ENCODE measurements at regions of chr13 and their contacts with region 1.

Region 1: GRCh38 chr13:74250738-74251190 is 116.6 kb upstream of the KLF12 start:
- DNase-seq: peak; percentile 88
- H3K4me3 ChIP-seq: no peak overlapping the region
- H3K27ac ChIP-seq: peak overlapping the region; percentile 44
- H3K4me1 ChIP-seq: peaks cover 22% of the 10 kb centered on the region
- H3K27me3 ChIP-seq: no peaks in the 10 kb centered on the region
- CTCF ChIP-seq: no peak

Region 2: GRCh38 chr13:74270018-74270417 is 19.3 kb after region 1 on chr13:
- CTCF ChIA-PET with region 1: no interaction called
- dilution Hi-C with region 1: no loop called
- in situ Hi-C with region 1: no loop called
- intact Hi-C with region 1: loop called (anchors 1 kb)
- DNase-seq: peak; percentile 86
- H3K4me3 ChIP-seq: no peak overlapping the region
- H3K27ac ChIP-seq: no peak overlapping the region
- H3K4me1 ChIP-seq: peaks cover 11% of the 10 kb centered on the region
- H3K27me3 ChIP-seq: no peaks in the 10 kb centered on the region
- CTCF ChIP-seq: no peak

Region 3: GRCh38 chr13:74550039-74550438 is 299.3 kb after region 1 on chr13:
- CTCF ChIA-PET with region 1: no interaction called
- dilution Hi-C with region 1: no loop called
- in situ Hi-C with region 1: no loop called
- intact Hi-C with region 1: no loop called
- DNase-seq: peak; percentile 26
- H3K4me3 ChIP-seq: no peak overlapping the region
- H3K27ac ChIP-seq: no peak overlapping the region
- H3K4me1 ChIP-seq: no peaks in the 10 kb centered on the region
- H3K27me3 ChIP-seq: no peaks in the 10 kb centered on the region
- CTCF ChIP-seq: no peak

Measured in mammary epithelial cell (primary cell).